Left cardiac atrium (tissue), 4 donors: ENCODE measurements at regions of chr5 and their contacts with region 1.

Region 1: DNA sequence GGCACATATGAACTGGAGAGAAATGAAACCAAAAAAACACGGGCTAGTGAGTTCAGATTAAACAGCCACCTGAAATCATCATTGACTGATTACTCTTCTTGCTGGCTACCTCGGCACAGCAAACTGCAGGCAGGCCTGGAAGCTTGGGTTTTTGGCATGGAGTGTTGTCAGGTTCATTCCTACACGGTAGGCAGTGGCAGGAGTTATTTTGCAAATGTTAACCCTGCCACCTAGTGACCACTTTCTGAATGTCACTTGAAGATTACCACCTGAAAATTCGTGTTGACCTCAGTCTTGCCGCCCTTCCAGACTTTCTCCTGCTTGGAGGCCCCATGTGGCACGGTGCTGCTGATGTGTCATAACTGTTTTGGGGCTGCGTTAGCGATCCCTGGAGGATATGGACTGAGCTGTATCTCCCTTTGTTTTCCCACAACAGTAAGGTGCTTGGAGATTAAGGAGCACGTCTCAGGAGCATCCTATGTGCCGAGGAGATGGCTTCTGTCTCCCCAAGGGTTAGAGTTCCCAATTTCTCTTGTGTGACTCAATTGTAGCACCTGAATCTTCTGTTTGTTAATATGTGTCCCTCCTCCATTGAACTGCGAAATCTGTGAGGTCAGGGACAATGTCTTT is 12.7 kb upstream of the CD180 start:
- DNase-seq: peak; percentile 33
- ATAC-seq: peak; percentile 85 to 86

Region 2: GRCh38 chr5:66814146-66814991 is 394.9 kb before region 1 on chr5:
- intact Hi-C with region 1: loop called (anchors 5 to 10 kb)
- DNase-seq: no peak
- ATAC-seq: peak in 1 of 2 donors; percentile 67

Region 3: GRCh38 chr5:67156976-67157583 is 52.2 kb before region 1 on chr5:
- intact Hi-C with region 1: loop called in 1 of 2 experiments (anchors 2 kb)
- DNase-seq: no peak
- ATAC-seq: no peak

Region 4: GRCh38 chr5:67165526-67166459 is 43.5 kb before region 1 on chr5:
- intact Hi-C with region 1: loop called in 1 of 2 experiments (anchors 2 kb)
- DNase-seq: peak; percentile 92
- ATAC-seq: peak; percentile 85 to 88